A549 (cell line): ENCODE measurements at regions of chr19 and their contacts with region 1.

Region 1: DNA sequence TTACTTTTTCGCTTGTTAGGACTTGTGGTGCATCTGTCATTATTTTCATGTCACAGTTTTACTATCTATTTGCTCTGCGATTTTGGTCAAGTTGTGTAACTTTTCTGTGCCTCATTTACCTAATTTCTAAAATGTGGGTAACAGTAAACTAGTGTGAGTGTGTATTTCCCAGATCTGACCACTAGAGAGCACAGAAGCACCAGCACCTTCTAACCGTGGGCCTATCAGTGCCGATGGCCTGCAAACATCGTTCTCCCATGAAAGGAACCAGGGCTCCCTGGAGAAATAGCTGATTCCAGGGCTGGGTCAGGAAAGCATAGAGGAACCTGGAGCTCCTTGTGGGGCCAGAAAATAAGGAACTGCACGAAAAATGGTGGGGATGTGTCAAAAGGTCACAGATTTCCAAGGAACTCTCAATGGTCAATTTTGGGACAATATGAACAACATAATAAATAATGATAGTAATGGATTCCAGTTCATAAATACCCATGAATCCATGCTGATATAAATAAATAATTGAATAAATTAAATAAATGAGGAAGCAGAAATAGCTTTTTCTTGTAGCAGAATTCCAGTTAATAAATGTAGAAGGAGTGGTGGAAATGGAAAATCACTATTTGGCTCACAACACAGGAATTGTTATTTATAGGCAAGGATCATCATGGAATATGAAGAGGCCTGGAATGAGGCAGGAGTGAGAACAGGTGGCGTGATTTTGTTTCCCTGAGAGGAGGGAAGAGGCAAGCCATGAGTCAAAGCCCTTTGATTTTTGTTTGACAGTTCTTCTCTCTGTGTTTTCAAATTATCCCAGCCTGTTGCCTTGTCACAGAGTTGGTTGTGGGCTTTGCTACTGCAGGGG is 31.1 kb downstream of the CEACAM8 start:
- DNase-seq: peak; percentile 76 to 95
- ATAC-seq: peak; percentile 79 to 91
- H3K4me3 ChIP-seq: no peak overlapping the region
- H3K27ac ChIP-seq: no peak overlapping the region
- H3K4me1 ChIP-seq: no peaks in the 10 kb centered on the region
- CTCF ChIP-seq: peak; percentile 81
- EP300 ChIP-seq: no peak
- POLR2A ChIP-seq: no peak
- RAD21 ChIP-seq: peak; percentile 77 to 78

Region 2: DNA sequence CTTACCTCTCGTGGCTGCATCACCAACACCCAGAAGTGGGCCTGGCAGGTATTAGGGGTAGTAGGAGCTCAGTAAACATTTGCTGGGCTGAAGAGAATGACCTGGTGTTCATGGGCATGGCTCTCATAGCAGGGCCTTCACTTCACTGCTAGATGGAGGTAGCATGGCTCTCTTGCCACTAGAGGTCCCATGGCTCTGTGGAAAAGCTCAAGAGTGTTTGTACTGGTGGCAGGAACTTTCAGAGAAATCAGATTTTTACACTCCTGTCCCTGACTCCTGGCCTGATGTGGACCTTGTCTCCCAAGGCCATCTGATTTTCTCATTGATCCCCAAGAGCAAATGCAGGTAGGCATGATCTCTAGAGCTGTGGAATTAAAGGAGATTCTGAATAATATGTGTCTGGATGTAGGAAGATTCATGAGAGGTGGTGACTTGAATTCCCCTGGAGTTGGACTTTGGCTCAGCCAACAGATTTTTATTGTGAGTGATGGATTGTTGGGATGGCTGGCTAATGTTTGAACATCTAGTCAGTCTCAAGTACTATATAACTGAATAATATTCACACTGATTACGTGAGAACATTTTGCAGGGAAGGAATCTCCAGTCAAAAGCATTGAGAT is 481.9 kb before region 1 on chr19:
- CTCF ChIA-PET with region 1: no interaction called
- POLR2A ChIA-PET with region 1: no interaction called
- DNase-seq: peak; percentile 82 to 95
- ATAC-seq: peak; percentile 88 to 92
- H3K4me3 ChIP-seq: no peak overlapping the region
- H3K27ac ChIP-seq: no peak overlapping the region
- H3K4me1 ChIP-seq: peaks cover 26% of the 10 kb centered on the region
- CTCF ChIP-seq: peak; percentile 70
- EP300 ChIP-seq: no peak
- POLR2A ChIP-seq: no peak
- RAD21 ChIP-seq: peak; percentile 52 to 61; a peak in 3 of 5 replicates

Region 3: DNA sequence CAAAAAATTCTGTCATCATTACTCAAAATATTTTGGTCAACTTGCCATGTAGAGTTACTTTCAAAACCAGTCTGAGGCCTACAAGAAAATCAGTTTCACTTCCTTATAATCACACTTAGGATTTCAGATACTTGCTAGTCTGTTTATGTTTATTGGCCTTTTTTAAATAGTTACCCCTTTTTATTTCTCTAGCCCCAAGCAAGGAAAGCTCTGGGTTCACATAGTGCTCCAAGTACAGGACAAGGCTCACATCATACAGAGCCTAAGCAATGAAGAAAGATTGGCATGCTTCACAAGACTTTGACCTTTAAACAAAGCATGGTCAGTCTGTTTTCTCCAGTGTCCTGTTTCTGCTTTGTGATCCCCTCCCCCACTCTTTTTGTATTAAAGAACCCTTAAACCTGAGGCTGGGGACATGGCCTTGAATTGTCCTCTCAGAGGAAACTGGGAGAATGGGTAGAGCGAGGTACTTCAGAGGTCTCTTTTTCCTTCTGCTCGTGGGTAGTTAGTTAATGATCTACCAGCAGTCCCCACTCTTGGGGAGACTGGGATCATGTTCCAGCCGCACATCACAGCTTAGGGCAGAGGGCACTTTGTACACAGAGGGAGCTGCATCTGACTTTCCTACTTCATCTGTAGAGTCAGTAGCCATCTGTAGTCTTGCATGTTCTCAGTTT is 66.0 kb before region 1 on chr19:
- CTCF ChIA-PET with region 1: interaction called, 13 read pairs
- POLR2A ChIA-PET with region 1: no interaction called
- DNase-seq: peak; percentile 73 to 80
- ATAC-seq: peak; percentile 75 to 93
- H3K4me3 ChIP-seq: no peak overlapping the region; the same call in 2 of the 3 replicates
- H3K27ac ChIP-seq: peak overlapping the region; percentile 73 to 76
- H3K4me1 ChIP-seq: peaks cover 30% of the 10 kb centered on the region
- CTCF ChIP-seq: no peak
- EP300 ChIP-seq: no peak
- POLR2A ChIP-seq: peak; percentile 32
- RAD21 ChIP-seq: 0 out of 5 replicates have a peak, but pooled peaks of 1 of the 2 experiments have one; percentile 2

Region 4: DNA sequence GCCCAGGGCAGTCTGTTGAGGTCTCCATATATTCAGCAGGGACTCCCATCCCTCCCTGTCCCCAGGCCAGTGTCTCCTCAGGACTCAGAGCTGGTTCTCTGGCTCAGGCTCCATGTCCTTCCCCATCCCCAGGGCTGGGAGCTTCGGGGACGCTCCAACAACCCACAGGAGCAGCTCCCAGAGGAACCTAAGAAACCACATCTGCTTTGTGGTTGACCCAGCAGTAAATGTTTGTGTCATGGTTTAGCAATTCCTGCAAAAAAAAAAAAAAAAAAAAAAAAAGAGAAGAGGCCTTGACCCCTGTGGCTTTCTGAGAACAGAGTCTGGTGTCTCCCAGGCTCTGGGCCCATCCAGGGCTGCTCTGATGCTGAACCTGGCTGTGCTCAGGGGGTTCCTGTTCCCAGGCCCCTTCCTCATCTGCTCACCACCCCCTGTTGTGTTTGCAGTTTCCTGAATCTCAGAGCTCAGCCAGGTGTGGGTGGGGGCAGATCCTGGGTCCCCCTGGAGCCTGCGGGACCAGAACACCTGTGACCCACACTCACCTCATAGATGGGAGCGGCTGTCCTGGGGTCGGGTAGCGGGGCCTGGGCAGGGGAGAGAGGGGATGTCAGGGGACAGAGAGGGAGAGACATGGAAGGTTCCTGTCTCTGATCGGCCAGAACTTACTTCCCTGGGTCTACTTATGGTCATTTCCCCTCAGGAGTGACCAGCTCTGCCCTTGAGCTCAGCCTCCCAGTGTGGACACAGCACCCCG is 10.1 kb before region 1 on chr19:
- CTCF ChIA-PET with region 1: interaction called, 104 read pairs
- POLR2A ChIA-PET with region 1: no interaction called
- DNase-seq: no peak
- ATAC-seq: no peak; a peak in 1 of 6 replicates
- H3K4me3 ChIP-seq: no peak overlapping the region
- H3K27ac ChIP-seq: no peak overlapping the region
- H3K4me1 ChIP-seq: no peaks in the 10 kb centered on the region
- CTCF ChIP-seq: no peak
- EP300 ChIP-seq: no peak
- POLR2A ChIP-seq: no peak
- RAD21 ChIP-seq: no peak

Region 5: GRCh38 chr19:42584466-42584865 is 20.9 kb after region 1 on chr19:
- CTCF ChIA-PET with region 1: interaction called, 35 read pairs
- POLR2A ChIA-PET with region 1: no interaction called
- DNase-seq: no peak
- ATAC-seq: no peak
- H3K4me3 ChIP-seq: no peak overlapping the region
- H3K27ac ChIP-seq: no peak overlapping the region
- H3K4me1 ChIP-seq: no peaks in the 10 kb centered on the region
- CTCF ChIP-seq: no peak
- EP300 ChIP-seq: no peak
- POLR2A ChIP-seq: no peak
- RAD21 ChIP-seq: no peak